Activated T-helper 1 cell treated with anti-CD3 and anti-CD28 coated beads, Interleukin-12 subunit alpha, Interleukin-12 subunit beta, Interleukin-2, Interleukin-4 antibody, amounts not matched to agents 30 ng/mL and 10 ng/mL and 1 ng/mL, durations not matched to agents 14 hours and 24 hours and 36 hours (primary cell): ENCODE measurements at regions of chr9 and their contacts with region 1.

Region 1: DNA sequence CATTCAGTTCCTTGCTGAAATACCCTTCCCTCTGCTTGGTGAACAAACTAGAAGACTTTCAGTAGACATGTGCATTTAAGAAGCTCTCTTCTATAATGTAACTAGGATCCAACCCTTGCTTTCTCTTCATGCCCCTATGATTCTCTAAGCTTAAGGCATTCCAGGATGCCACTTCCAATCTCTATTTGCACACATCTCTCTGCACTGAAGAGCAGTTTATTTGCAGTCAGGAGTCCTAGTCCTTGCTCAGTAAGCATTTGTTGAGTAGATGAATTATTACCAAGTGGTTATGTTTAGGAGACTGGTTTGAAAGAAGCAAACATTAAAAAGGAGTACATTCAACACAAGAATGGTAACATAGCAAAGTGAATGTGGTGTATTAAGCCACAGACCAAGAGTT is 274.2 kb upstream of the KLF9 start:
- DNase-seq: no peak
- H3K4me3 Mint-ChIP-seq: no peak overlapping the region
- H3K27ac Mint-ChIP-seq: no peak overlapping the region
- H3K4me1 Mint-ChIP-seq: no peaks in the 10 kb centered on the region
- H3K27me3 Mint-ChIP-seq: peaks cover 12% of the 10 kb centered on the region

Region 2: DNA sequence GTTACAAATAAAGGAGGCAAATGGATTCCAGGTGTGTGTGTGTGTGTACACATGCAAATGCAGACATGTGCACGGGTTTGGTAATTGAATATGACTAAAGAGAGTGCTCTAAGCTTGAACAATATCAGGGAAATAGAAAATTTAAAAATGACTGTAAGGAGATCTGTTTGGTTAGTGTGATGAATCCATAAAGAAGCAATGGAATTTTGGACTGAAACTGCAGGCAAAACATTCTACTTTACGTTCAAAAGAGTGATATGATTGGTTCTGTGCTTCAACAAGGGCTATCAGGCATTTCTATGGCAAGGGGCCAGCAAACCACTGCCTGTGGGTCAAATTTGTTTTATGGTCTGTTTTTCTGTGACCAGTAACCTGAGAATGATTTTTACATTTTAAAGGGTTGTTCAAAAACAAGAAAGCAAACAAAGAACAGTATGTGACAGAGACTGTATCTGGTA is 58.6 kb after region 1 on chr9:
- intact Hi-C with region 1: loop called (anchors 2 kb)
- DNase-seq: no peak
- H3K4me3 Mint-ChIP-seq: no peak overlapping the region
- H3K27ac Mint-ChIP-seq: no peak overlapping the region
- H3K4me1 Mint-ChIP-seq: no peaks in the 10 kb centered on the region
- H3K27me3 Mint-ChIP-seq: peaks cover 2% of the 10 kb centered on the region